Heart left ventricle (tissue), 16 donors: ENCODE measurements at regions of chr15 and their contacts with region 1.

Region 1: GRCh38 chr15:56821721-56822425 is 88.6 kb upstream of the ZNF280D start:
- DNase-seq: peak in 4 of 5 donors; percentile 47 to 61 (median 52)
- ATAC-seq: peak; percentile 69 to 87 (median 85)
- H3K4me3 ChIP-seq: no peak overlapping the region
- H3K27ac ChIP-seq: no peak overlapping the region
- H3K4me1 ChIP-seq: peaks cover 0 to 21% (median 10%) of the 10 kb centered on the region in 12 donors
- H3K27me3 ChIP-seq: no peaks in the 10 kb centered on the region
- CTCF ChIP-seq: peak; percentile 55 to 74 (median 66)
- POLR2A ChIP-seq: no peak

Region 2: DNA sequence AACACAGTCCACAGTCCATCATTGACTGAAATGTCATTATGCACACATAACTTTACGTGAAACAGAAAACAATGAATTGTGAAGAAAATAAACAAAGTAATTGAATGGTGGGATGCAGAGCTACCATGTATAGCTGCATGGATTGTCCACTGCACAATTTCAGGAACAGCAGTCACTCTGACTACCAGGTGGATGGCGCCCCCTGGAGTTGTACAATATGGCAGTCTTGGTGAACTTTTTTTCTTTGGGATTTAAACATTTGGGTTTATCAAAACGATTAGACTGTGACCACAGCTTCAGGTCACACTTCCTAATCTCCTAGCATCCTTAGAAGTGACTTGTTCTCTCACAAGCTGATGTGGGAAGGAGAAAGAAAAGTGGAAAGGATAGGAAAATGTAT is 47.7 kb after region 1 on chr15:
- intact Hi-C with region 1: loop called in 3 of 10 experiments (anchors 5 kb)
- DNase-seq: peak in 3 of 5 donors; percentile 31 to 41 (median 34)
- ATAC-seq: no peak
- H3K4me3 ChIP-seq: no peak overlapping the region
- H3K27ac ChIP-seq: no peak overlapping the region
- H3K4me1 ChIP-seq: peaks cover 0 to 11% (median 0%) of the 10 kb centered on the region in 12 donors
- H3K27me3 ChIP-seq: no peaks in the 10 kb centered on the region
- CTCF ChIP-seq: peak; percentile 33 to 69 (median 61)
- POLR2A ChIP-seq: no peak

Region 3: GRCh38 chr15:56887782-56888438 is 66.0 kb after region 1 on chr15:
- intact Hi-C with region 1: no loop called
- DNase-seq: no peak
- ATAC-seq: no peak
- H3K4me3 ChIP-seq: peak overlapping the region; percentile 47 to 86 (median 71)
- H3K27ac ChIP-seq: peak overlapping the region; percentile 95 to 99 (median 98)
- H3K4me1 ChIP-seq: peaks cover 0 to 37% (median 19%) of the 10 kb centered on the region in 12 donors
- H3K27me3 ChIP-seq: no peaks in the 10 kb centered on the region
- CTCF ChIP-seq: no peak
- POLR2A ChIP-seq: no peak

Region 4: GRCh38 chr15:56984681-56985481 is 163.0 kb after region 1 on chr15:
- intact Hi-C with region 1: loop called in 1 of 10 experiments (anchors 10 kb)
- DNase-seq: no peak
- ATAC-seq: peak in 3 of 4 donors; percentile 41 to 71 (median 60)
- H3K4me3 ChIP-seq: no peak overlapping the region
- H3K27ac ChIP-seq: peak overlapping the region in 5 of 12 donors; percentile 21 to 78 (median 34)
- H3K4me1 ChIP-seq: peaks cover 0 to 92% (median 57%) of the 10 kb centered on the region in 12 donors
- H3K27me3 ChIP-seq: no peaks in the 10 kb centered on the region
- CTCF ChIP-seq: no peak
- POLR2A ChIP-seq: no peak

Region 5: GRCh38 chr15:57146506-57147201 is 324.8 kb after region 1 on chr15:
- intact Hi-C with region 1: loop called in 3 of 10 experiments (anchors 5 kb)
- DNase-seq: peak in 1 of 5 donors; percentile 27
- ATAC-seq: peak in 2 of 4 donors; percentile 32 to 56
- H3K4me3 ChIP-seq: peak overlapping the region in 10 of 12 donors; percentile 4 to 45 (median 30)
- H3K27ac ChIP-seq: peak overlapping the region in 10 of 12 donors; percentile 2 to 67 (median 39)
- H3K4me1 ChIP-seq: peaks cover 3 to 60% (median 40%) of the 10 kb centered on the region in 12 donors
- H3K27me3 ChIP-seq: no peaks in the 10 kb centered on the region
- CTCF ChIP-seq: peak; percentile 62 to 86 (median 80)
- POLR2A ChIP-seq: no peak

Region 6: DNA sequence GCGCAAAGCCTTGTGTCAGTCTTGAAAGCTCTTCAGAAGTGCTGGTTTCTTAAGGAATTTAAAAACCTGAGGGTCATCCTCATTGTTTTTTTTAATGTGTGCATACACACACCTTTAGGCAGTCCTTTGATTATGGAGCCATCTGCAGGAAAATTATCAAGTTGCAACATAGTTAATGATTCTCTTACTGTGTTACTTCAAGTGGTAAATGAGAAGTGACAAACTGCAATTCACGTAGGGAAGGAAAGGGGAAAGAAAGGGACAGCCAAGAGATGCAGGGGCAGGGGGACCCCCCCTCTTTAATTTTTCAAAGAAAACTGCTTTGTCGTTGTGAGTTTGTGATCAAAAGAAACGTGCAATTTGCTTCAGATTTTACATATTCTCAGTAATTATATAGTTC is 392.0 kb after region 1 on chr15:
- intact Hi-C with region 1: loop called in 9 of 10 experiments (anchors 5 to 10 kb)
- DNase-seq: no peak
- ATAC-seq: peak; percentile 47 to 68 (median 60)
- H3K4me3 ChIP-seq: no peak overlapping the region
- H3K27ac ChIP-seq: no peak overlapping the region
- H3K4me1 ChIP-seq: peaks cover 0 to 67% (median 22%) of the 10 kb centered on the region in 12 donors
- H3K27me3 ChIP-seq: no peaks in the 10 kb centered on the region
- CTCF ChIP-seq: peak; percentile 30 to 73 (median 64)
- POLR2A ChIP-seq: no peak

Region 7: GRCh38 chr15:57527382-57528091 is 705.7 kb after region 1 on chr15:
- intact Hi-C with region 1: loop called in 1 of 10 experiments (anchors 5 kb)
- DNase-seq: peak in 2 of 5 donors; percentile 51 to 55
- ATAC-seq: peak in 3 of 4 donors; percentile 67 to 76 (median 76)
- H3K4me3 ChIP-seq: no peak overlapping the region
- H3K27ac ChIP-seq: no peak overlapping the region
- H3K4me1 ChIP-seq: peaks cover 0 to 14% (median 3%) of the 10 kb centered on the region in 12 donors
- H3K27me3 ChIP-seq: no peaks in the 10 kb centered on the region
- CTCF ChIP-seq: peak; percentile 49 to 80 (median 66)
- POLR2A ChIP-seq: no peak

Region 8: GRCh38 chr15:57878573-57878972 is 1056.7 kb after region 1 on chr15:
- intact Hi-C with region 1: no loop called
- DNase-seq: no peak
- ATAC-seq: no peak
- H3K4me3 ChIP-seq: no peak overlapping the region
- H3K27ac ChIP-seq: no peak overlapping the region
- H3K4me1 ChIP-seq: no peaks in the 10 kb centered on the region
- H3K27me3 ChIP-seq: no peaks in the 10 kb centered on the region
- CTCF ChIP-seq: no peak
- POLR2A ChIP-seq: no peak